ENCODE measurements at regions of chr2 and their contacts with region 1.

Region 1: DNA sequence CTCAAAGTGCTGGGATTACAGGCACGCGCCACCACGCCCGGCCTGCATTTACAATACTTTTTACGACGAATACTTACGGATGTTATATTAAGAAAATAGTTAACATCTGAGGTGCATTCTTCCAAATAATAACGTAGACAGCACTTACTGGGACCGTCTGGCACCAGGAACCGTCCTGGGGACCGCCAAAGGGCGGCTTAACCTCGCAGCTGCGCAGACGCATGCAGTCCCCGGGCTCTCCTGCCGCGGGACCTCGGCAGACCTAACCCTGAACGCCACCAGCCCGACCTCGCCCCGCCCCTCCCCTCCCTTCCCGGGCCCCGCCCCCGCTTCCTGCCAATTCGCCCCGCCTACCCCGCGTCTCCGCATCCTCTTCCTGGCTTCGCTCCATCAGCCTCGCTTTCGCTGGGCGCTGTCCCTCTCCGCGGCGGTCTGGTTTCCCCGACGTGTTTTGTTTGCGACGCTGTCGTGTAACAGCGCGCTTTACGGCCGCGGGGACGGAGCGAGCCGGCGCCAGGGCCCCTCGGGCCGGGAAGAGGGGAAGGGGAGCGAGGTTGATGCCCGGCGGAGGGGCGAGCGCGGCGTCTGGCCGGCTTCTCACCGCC is at the start of gene CNOT11:
- DNase-seq: peak; percentile 99
- H3K4me3 ChIP-seq: peak within 1 kb of the TSS; percentile 65 to 94 (median 88)
- H3K27ac ChIP-seq: peak within 1 kb of the TSS; percentile 89
- H3K4me1 ChIP-seq: peaks cover 18% of the 10 kb centered on the region
- H3K27me3 ChIP-seq: no peaks in the 10 kb centered on the region
- CTCF ChIP-seq: peak; percentile 0 to 8
- POLR2A ChIP-seq: peak; percentile 99
- total RNA-seq, gene CNOT11: 44.3 and 47.7 TPM in 2 replicates

Region 2: GRCh38 chr2:101012706-101013181 is 239.8 kb before region 1 on chr2:
- CTCF ChIA-PET with region 1: interaction called, 5 read pairs
- POLR2A ChIA-PET with region 1: no interaction called
- dilution Hi-C with region 1: no loop called
- intact Hi-C with region 1: loop called (anchors 5 kb)
- DNase-seq: peak; percentile 56
- H3K4me3 ChIP-seq: no peak overlapping the region
- H3K27ac ChIP-seq: no peak overlapping the region
- H3K4me1 ChIP-seq: no peaks in the 10 kb centered on the region
- H3K27me3 ChIP-seq: no peaks in the 10 kb centered on the region
- CTCF ChIP-seq: peak; percentile 57 to 72
- POLR2A ChIP-seq: no peak

Region 3: GRCh38 chr2:101238930-101239759 is 13.4 kb before region 1 on chr2:
- CTCF ChIA-PET with region 1: interaction called, 20 read pairs
- POLR2A ChIA-PET with region 1: no interaction called
- dilution Hi-C with region 1: no loop called
- intact Hi-C with region 1: no loop called
- DNase-seq: no peak
- H3K4me3 ChIP-seq: no peak overlapping the region
- H3K27ac ChIP-seq: no peak overlapping the region
- H3K4me1 ChIP-seq: no peaks in the 10 kb centered on the region
- H3K27me3 ChIP-seq: no peaks in the 10 kb centered on the region
- CTCF ChIP-seq: no peak
- POLR2A ChIP-seq: no peak

Region 4: DNA sequence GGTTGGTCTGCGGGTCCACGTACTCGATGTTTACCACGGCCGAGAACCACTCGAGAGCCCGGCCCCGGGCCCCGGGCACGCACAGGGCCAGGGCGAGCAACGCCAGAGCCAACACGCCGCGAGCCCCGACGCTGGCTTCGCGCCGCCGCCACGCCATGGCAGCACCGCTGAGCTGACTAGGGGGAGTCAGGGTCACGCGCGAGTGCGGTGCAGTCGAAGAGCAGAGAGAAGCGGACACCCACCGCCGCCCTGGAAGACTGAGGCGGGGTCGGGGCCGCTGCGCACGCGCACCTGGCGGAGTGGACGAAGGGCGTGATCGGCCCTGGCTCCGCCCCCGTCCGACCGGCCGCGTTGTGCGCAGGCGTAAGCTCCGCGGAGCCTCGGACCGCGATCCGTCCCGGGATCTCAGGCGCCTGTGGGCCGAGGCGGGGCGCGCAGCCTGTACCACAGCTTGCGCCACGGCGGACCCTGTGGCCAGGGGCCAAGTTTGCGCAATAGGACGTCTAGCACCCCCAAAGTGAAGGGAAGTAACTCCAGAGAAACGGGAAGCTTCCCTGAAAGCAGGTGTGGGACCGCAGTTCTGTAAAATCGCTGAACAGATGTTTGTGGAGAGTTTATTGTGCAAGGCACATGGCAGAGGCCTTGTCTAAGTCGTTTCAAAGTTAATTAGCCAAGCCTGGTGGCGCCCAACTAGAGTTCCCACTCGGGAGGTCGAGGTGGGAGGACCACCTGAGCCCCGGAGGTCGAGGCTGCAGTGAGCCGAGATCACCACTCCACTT is 56.1 kb after region 1 on chr2 and contains the start of gene RNF149:
- CTCF ChIA-PET with region 1: interaction called, 3 read pairs
- POLR2A ChIA-PET with region 1: no interaction called
- dilution Hi-C with region 1: no loop called
- intact Hi-C with region 1: loop called (anchors 2 kb)
- DNase-seq: peak; percentile 94
- H3K4me3 ChIP-seq: peak within 1 kb of the TSS; percentile 68 to 84 (median 82)
- H3K27ac ChIP-seq: peak within 1 kb of the TSS; percentile 83
- H3K4me1 ChIP-seq: peaks cover 23% of the 10 kb centered on the region
- H3K27me3 ChIP-seq: no peaks in the 10 kb centered on the region
- CTCF ChIP-seq: no peak
- POLR2A ChIP-seq: peak; percentile 95
- total RNA-seq, gene RNF149: 57.6 and 66.6 TPM in 2 replicates

Region 5: DNA sequence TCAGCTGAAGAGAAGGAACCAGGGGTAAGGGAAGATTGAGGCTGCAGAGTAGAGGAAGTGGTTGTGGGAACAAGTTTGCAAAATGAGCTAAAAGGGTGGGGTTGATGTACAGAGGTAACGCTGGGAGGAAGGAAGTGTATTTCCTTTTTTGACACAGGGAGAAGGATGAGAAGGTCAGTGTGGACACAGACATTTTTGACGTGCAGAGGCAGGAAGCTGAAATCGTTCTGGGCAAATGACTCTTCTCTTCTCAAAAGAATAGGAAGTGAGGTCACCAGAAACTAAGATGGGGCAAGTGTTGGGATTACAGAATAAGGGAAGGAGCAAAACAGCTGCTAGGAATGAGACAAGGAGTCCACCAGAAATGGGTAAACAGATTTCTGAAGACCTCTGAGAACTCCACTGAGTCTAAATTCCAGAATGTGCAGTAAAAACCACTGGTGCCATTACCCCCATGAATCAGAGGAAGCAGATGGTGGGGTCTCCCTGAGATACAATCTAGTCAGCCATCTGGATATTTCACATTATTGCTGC is 76.0 kb after region 1 on chr2:
- CTCF ChIA-PET with region 1: no interaction called
- POLR2A ChIA-PET with region 1: no interaction called
- dilution Hi-C with region 1: no loop called
- intact Hi-C with region 1: loop called (anchors 1 kb)
- DNase-seq: peak; percentile 98
- H3K4me3 ChIP-seq: peak overlapping the region in 1 of 3 experiments; percentile 1
- H3K27ac ChIP-seq: peak overlapping the region; percentile 95
- H3K4me1 ChIP-seq: peaks cover 37% of the 10 kb centered on the region
- H3K27me3 ChIP-seq: no peaks in the 10 kb centered on the region
- CTCF ChIP-seq: no peak
- POLR2A ChIP-seq: peak; percentile 82

Region 6: GRCh38 chr2:101387151-101387807 is 134.8 kb after region 1 on chr2 and contains the start of gene CREG2:
- CTCF ChIA-PET with region 1: no interaction called
- POLR2A ChIA-PET with region 1: no interaction called
- dilution Hi-C with region 1: no loop called
- intact Hi-C with region 1: loop called (anchors 5 kb)
- DNase-seq: peak; percentile 74
- H3K4me3 ChIP-seq: peak within 1 kb of the TSS; percentile 32 to 54 (median 43)
- H3K27ac ChIP-seq: no peak within 1 kb of the TSS
- H3K4me1 ChIP-seq: peaks cover 19% of the 10 kb centered on the region
- H3K27me3 ChIP-seq: peaks cover 36 to 46% of the 10 kb centered on the region in 2 experiments
- CTCF ChIP-seq: peak; percentile 53 to 61
- POLR2A ChIP-seq: no peak
- total RNA-seq, gene CREG2: 0.88 and 2.0 TPM in 2 replicates

Region 7: GRCh38 chr2:101983928-101984327 is 731.4 kb after region 1 on chr2:
- CTCF ChIA-PET with region 1: no interaction called
- POLR2A ChIA-PET with region 1: no interaction called
- dilution Hi-C with region 1: no loop called
- intact Hi-C with region 1: loop called (anchors 10 kb)
- DNase-seq: peak; percentile 16
- H3K4me3 ChIP-seq: no peak overlapping the region
- H3K27ac ChIP-seq: no peak overlapping the region
- H3K4me1 ChIP-seq: no peaks in the 10 kb centered on the region
- H3K27me3 ChIP-seq: peaks cover 2 to 3% of the 10 kb centered on the region in 2 experiments
- CTCF ChIP-seq: peak; percentile 10 to 36
- POLR2A ChIP-seq: no peak